HEK293 (cell line): ENCODE measurements at regions of chr11 and their contacts with region 1.

Region 1: GRCh38 chr11:62726915-62727763 is at the start of gene HNRNPUL2:
- H3K4me3 ChIP-seq: peak within 1 kb of the TSS; percentile 93
- H3K27ac ChIP-seq: peak within 1 kb of the TSS; percentile 98
- H3K4me1 ChIP-seq: peaks cover 4% of the 10 kb centered on the region; the same call in 1 of the 2 replicates
- CTCF ChIP-seq: no peak

Region 2: DNA sequence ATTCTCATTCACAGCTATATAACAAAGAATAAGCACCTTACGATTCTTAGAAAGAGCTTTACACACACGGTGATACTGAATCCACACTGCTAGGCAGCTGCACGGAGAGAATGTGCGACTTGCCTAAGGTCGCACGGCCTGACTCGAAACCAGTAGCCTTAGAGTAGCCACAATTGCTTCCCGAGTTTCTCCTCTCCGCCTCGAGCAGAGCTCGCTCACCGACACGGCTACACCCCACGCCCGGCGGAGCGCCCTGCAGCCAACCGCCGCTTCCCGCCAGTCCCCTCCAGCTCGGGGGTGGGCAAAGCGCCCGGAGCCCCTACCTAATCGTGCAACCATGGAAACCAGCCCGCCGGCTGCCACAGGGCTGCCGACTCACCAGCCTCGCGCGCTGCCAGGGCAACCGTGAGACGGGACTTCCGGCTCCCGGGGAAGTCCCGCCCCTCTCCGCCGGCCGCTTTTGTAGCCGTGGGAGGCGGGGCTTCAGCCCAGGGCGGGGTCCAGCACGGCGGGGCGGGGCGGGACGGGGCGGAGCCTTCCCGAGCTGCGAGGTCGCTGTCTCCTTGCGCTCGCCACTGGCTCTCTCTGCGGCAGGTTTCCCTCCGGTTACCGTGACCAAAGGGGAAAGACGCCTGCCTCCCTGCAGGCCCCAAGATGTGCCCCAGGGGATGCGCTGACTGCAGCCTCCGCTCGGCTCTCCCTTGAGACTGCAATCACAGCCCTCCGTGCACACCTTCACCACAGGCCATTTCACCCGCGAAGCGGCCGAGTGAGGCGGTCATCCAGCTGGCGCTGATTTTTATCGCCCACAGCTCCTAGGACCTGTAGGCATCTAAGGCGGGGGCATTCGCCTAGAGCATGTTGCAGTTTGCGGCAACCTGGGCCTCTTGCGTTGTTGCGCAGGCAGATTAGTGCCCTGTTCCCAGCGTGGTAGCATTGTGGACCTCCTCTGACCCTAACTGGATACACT is 21.0 kb before region 1 on chr11:
- CTCF ChIA-PET with region 1: interaction called, 3 read pairs
- POLR2A ChIA-PET with region 1: interaction called, 34 read pairs
- H3K4me3 ChIP-seq: peak overlapping the region; percentile 62
- H3K27ac ChIP-seq: peak overlapping the region; percentile 62
- H3K4me1 ChIP-seq: peaks cover 3% of the 10 kb centered on the region; the same call in 1 of the 2 replicates
- CTCF ChIP-seq: no peak

Region 3: GRCh38 chr11:62753736-62754603 is 26.8 kb after region 1 on chr11 and contains the start of gene ZBTB3:
- CTCF ChIA-PET with region 1: interaction called, 4 read pairs
- POLR2A ChIA-PET with region 1: interaction called, 137 read pairs
- H3K4me3 ChIP-seq: peak within 1 kb of the TSS; percentile 73
- H3K27ac ChIP-seq: peak within 1 kb of the TSS; percentile 32; the same call in 1 of the 2 replicates
- H3K4me1 ChIP-seq: no peaks in the 10 kb centered on the region
- CTCF ChIP-seq: no peak

Region 4: DNA sequence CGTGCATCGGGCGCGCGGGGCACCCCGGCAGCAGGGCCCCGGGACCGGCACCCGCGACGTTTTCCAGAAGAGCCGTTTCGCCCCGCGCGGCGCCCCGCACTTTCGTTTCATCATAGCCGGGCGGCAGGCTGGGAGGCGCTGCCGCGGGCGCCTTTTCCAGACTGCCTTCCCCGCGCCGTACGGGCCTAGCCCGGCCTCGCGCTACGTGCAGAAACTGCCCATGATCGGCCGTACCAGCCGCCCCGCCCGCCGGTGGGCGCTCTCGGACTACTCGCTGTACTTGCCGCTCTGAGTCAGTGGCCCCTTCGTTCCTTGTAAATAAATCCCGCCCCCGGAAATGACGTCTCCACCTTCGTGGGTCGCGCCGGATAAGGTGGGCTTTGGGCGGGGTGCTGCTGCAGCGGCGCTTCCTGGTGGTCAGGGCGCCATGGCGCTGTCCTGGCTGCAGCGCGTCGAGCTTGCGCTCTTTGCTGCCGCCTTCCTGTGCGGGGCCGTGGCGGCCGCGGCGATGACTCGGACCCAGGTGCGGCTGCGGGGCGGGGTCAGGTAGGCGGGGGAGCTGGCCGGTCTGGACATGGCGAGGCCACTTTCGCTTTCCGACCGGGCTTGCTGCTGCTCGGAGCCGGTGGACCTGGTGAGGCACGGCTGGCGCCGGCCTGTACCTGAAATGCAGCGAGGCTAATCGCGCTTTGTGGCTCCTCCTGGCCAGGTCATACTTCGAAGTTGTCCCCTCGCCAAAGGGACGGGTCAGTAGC is 60.0 kb after region 1 on chr11 and contains the start of gene TMEM179B:
- CTCF ChIA-PET with region 1: interaction called, 6 read pairs
- POLR2A ChIA-PET with region 1: interaction called, 19 read pairs
- H3K4me3 ChIP-seq: peak within 1 kb of the TSS; percentile 87
- H3K27ac ChIP-seq: peak within 1 kb of the TSS; percentile 76
- H3K4me1 ChIP-seq: no peaks in the 10 kb centered on the region
- CTCF ChIP-seq: peak; percentile 97

Region 5: GRCh38 chr11:62855571-62856332 is 128.6 kb after region 1 on chr11:
- CTCF ChIA-PET with region 1: no interaction called
- POLR2A ChIA-PET with region 1: interaction called, 24 read pairs
- H3K4me3 ChIP-seq: peak overlapping the region; percentile 88
- H3K27ac ChIP-seq: peak overlapping the region; percentile 82
- H3K4me1 ChIP-seq: no peaks in the 10 kb centered on the region
- CTCF ChIP-seq: no peak